Heart left ventricle (tissue), 16 donors: ENCODE measurements at regions of chr19 and their contacts with region 1.

Region 1: GRCh38 chr19:38759590-38760003 is 13.7 kb downstream of the LGALS7 start:
- DNase-seq: no peak
- ATAC-seq: no peak
- H3K4me3 ChIP-seq: no peak overlapping the region
- H3K27ac ChIP-seq: no peak overlapping the region
- H3K4me1 ChIP-seq: no peaks in the 10 kb centered on the region
- H3K27me3 ChIP-seq: no peaks in the 10 kb centered on the region
- CTCF ChIP-seq: no peak
- POLR2A ChIP-seq: no peak

Region 2: DNA sequence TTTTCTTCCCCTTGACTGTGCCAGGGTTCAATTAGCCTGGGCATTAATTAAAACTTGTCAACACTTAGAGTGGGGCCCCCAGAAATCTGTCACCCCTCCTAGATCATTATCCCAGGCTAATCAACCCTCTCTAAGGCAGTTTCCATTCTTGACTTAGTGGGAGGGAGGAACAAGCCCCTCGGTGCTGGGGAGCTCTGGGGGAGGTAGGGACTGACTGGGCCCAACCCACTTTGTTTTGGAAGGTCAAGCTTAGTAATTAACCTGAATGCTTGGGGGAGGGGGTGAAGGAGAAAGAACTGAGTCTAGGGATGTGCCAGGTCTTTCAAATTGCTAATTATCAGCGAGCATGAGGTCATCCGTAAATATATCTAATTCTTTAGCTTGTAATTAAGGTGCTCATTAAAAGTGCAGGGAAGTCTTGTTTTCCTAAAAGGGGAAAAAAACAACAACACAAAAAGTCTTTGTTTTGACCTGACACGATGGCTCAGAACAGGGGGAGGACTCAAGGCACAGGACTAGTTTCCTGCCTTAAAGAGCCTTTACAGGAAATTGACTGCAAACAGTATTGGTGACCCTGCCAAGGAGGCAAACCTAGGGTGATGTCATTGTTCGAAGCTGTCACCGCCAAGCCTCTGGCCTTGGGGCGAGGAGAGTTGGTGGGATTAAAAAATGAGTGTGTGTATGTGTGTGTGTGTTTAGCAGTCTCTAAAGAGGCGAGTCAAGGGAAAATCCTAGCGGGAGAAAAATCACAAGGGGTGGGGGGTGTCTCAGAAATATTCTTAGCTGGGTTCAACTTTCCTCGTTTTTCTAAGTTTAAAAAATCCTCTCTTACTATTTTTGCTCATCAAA is 92.7 kb before region 1 on chr19:
- intact Hi-C with region 1: no loop called
- DNase-seq: peak in 4 of 5 donors; percentile 59 to 75 (median 70)
- ATAC-seq: peak in 3 of 4 donors; percentile 29 to 52 (median 48)
- H3K4me3 ChIP-seq: peak overlapping the region in 1 of 12 donors; percentile 19
- H3K27ac ChIP-seq: peak overlapping the region; percentile 88 to 99 (median 96)
- H3K4me1 ChIP-seq: peaks cover 57 to 100% (median 100%) of the 10 kb centered on the region in 12 donors
- H3K27me3 ChIP-seq: no peaks in the 10 kb centered on the region
- CTCF ChIP-seq: no peak
- POLR2A ChIP-seq: no peak

Region 3: GRCh38 chr19:38805180-38805579 is 45.6 kb after region 1 on chr19:
- intact Hi-C with region 1: loop called in 1 of 10 experiments (anchors 10 kb)
- DNase-seq: no peak
- ATAC-seq: peak in 3 of 4 donors; percentile 53 to 93 (median 61)
- H3K4me3 ChIP-seq: no peak overlapping the region
- H3K27ac ChIP-seq: peak overlapping the region in 5 of 12 donors; percentile 11 to 68 (median 20)
- H3K4me1 ChIP-seq: peaks cover 0 to 6% (median 0%) of the 10 kb centered on the region in 12 donors
- H3K27me3 ChIP-seq: no peaks in the 10 kb centered on the region
- CTCF ChIP-seq: no peak
- POLR2A ChIP-seq: no peak